ENCODE measurements at regions of chr10 and their contacts with region 1.

Region 1: GRCh38 chr10:110210674-110211464 is 3.5 kb downstream of the MXI1 start:
- DNase-seq: peak; percentile 99
- H3K4me3 Mint-ChIP-seq: peak overlapping the region; percentile 84
- H3K27ac Mint-ChIP-seq: peak overlapping the region; percentile 88
- H3K4me1 Mint-ChIP-seq: peaks cover 22% of the 10 kb centered on the region
- H3K27me3 Mint-ChIP-seq: no peaks in the 10 kb centered on the region
- CTCF ChIP-seq: no peak

Region 2: DNA sequence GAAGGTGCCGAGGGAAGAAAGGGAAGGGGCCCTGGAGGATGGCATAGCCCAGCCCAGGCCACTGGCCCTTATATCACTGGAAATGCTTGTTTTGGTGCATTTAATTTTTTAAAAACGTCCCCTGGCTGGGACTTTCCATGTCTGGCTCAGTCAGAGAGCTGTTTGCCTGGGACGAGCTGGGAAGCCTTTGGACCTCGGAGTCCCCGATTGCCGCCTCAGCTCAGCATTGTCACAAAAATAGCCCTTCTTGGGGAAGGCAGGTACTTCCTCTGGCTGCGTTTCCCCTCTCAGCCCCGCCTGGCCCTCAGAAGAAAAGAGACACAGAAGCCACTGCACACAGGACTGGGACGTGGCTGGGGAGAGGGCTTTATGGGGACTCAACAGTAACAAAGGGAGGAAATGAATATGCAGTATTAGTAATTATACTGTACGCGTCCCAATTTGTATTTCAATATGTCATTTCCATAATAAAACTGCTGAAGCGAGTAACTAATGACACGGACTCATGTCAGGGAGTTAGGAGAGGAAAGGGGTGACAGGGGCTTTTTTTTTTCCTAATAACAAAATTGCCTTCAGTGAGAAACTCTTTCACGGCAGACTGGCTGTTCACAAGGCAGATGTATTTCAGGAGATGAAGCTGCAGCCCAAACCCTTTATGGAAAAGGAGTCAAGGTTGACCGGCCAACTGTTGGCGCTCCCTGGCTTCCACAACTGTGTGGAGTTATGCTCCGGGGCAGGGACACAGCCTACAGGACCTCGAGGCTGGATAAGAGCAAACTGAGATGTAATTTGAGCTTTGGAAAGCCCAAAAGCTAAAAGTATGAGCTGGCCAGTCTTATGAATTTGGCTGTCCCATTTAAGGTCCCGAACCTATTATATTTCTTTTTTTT is 34.5 kb before region 1 on chr10:
- CTCF ChIA-PET with region 1: interaction called, 7 read pairs
- POLR2A ChIA-PET with region 1: interaction called, 11 read pairs
- intact Hi-C with region 1: no loop called
- DNase-seq: no peak
- H3K4me3 Mint-ChIP-seq: no peak overlapping the region
- H3K27ac Mint-ChIP-seq: no peak overlapping the region
- H3K4me1 Mint-ChIP-seq: peaks cover 12% of the 10 kb centered on the region
- H3K27me3 Mint-ChIP-seq: no peaks in the 10 kb centered on the region
- CTCF ChIP-seq: no peak

Region 3: DNA sequence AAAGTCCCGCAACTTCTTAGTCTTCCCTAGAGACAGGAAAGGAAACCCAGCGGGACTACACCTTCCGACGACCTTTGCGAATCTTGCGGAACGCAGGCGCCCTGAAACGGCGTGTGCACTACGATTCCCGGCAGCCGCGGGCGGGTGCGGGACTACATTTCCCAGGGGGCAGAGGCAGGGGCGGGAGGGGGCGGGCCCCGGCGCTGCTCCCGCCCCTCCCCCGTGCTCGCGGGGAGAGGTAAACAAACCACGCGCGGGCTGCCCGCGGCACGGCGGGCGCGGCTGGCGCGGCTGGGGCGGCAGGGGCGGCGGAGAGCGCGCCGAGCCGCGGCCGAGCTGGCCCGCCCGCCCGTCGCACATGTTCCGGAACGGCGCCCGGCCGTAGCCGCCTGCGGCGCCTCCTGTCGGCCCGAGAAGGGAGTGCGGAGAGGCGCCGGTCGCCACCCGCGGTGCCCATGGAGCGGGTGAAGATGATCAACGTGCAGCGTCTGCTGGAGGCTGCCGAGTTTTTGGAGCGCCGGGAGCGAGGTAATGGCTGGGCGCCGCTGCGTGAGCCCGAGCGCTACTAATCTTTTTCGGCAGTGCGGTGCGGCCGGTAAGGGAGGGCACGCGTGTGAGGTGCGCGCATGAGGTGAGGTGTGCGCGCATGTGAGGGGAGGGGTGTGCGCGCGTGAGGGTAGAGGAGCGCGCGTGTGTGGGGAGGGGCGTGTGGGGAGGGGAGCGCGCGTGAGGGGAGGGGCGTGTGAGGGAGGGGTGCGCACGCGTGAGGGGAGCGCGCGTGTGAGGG is 15.1 kb after region 1 on chr10:
- CTCF ChIA-PET with region 1: interaction called, 54 read pairs
- POLR2A ChIA-PET with region 1: interaction called, 288 read pairs
- intact Hi-C with region 1: loop called (anchors 1 kb)
- DNase-seq: peak; percentile 92
- H3K4me3 Mint-ChIP-seq: peak overlapping the region; percentile 81
- H3K27ac Mint-ChIP-seq: peak overlapping the region; percentile 67
- H3K4me1 Mint-ChIP-seq: peaks cover 33% of the 10 kb centered on the region
- H3K27me3 Mint-ChIP-seq: no peaks in the 10 kb centered on the region
- CTCF ChIP-seq: peak; percentile 63

Region 4: DNA sequence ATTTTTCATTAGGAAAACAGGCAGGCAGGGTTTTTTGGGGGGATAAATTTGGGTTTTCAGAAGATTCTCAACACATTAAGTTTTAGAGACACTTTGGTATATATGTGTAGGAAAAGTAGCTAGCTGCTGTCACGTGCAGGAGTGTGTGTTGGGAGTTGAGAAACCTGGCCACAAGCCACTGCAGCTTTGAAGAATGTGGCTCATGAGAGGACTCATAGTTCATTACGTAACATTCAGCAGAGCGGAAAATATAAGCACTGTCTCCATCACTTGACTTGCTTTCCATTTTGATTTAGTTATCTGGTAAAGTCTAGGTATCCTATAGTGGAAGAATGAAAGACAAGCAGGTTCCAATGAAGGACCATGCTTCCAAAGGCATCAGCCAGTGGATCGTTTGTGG is 62.6 kb after region 1 on chr10:
- CTCF ChIA-PET with region 1: interaction called, 13 read pairs
- POLR2A ChIA-PET with region 1: interaction called, 30 read pairs
- intact Hi-C with region 1: no loop called
- DNase-seq: peak; percentile 91
- H3K4me3 Mint-ChIP-seq: no peak overlapping the region
- H3K27ac Mint-ChIP-seq: peak overlapping the region; percentile 2
- H3K4me1 Mint-ChIP-seq: peaks cover 16% of the 10 kb centered on the region
- H3K27me3 Mint-ChIP-seq: no peaks in the 10 kb centered on the region
- CTCF ChIP-seq: no peak

Region 5: DNA sequence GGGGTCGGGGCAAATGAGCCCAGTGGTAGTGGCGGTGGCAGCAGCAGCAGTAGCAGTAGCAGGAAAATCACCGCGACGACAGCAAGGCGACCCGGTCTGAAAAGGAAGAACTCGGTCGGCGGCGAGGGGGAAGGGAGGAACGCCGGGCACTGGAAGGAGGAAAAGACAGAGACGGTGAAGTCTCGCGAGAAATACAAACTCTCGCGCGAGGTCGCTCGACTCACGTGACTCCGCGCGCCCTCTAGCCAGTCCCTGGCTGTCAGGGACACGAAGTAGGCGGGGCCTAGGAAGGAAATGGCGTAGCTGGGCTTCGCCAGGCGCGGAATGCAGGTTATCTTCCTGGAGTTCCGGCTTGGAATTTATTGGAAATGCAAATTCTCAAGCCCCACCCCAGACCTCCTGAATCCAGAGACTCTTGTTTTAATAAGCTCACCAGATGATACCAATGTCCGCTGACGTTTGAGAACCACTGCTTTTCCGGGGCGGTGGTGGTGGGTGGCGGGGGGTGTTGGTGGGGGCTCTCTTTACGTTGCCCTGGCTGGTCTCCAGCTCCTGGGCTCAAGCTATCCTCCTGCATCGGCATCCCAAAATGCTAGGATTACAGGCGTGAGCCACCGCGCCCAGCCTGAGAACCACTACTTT is 94.0 kb after region 1 on chr10 and contains the start of gene SMNDC1:
- CTCF ChIA-PET with region 1: interaction called, 4 read pairs
- POLR2A ChIA-PET with region 1: interaction called, 25 read pairs
- intact Hi-C with region 1: no loop called
- DNase-seq: peak; percentile 98
- H3K4me3 Mint-ChIP-seq: peak within 1 kb of the TSS; percentile 94
- H3K27ac Mint-ChIP-seq: peak within 1 kb of the TSS; percentile 95
- H3K4me1 Mint-ChIP-seq: peaks cover 10% of the 10 kb centered on the region
- H3K27me3 Mint-ChIP-seq: no peaks in the 10 kb centered on the region
- CTCF ChIP-seq: no peak
- total RNA-seq, gene SMNDC1: 46.6 and 48.2 TPM in 2 replicates

Measured in MCF 10A (cell line).